H1 (cell line): ENCODE measurements at regions of chr14 and their contacts with region 1.

Region 1: GRCh38 chr14:69611201-69612011 is at the start of gene SUSD6:
- DNase-seq: peak; percentile 29 to 77
- H3K4me3 ChIP-seq: peak within 1 kb of the TSS; percentile 59 to 80 (median 62)
- H3K27ac ChIP-seq: no peak within 1 kb of the TSS
- H3K4me1 ChIP-seq: peaks cover 2 to 15% (median 5%) of the 10 kb centered on the region in 4 experiments; a peak in 5 of 7 replicates
- H3K27me3 ChIP-seq: peaks cover 0 to 3% (median 0%) of the 10 kb centered on the region in 4 experiments; a peak in 1 of 7 replicates
- CTCF ChIP-seq: no peak; a peak in 1 of 4 replicates
- EP300 ChIP-seq: no peak
- POLR2A ChIP-seq: no peak
- RAD21 ChIP-seq: no peak; a peak in 1 of 4 replicates
- total RNA-seq, gene SUSD6: 3.8 and 5.1 TPM in 2 replicates

Region 2: DNA sequence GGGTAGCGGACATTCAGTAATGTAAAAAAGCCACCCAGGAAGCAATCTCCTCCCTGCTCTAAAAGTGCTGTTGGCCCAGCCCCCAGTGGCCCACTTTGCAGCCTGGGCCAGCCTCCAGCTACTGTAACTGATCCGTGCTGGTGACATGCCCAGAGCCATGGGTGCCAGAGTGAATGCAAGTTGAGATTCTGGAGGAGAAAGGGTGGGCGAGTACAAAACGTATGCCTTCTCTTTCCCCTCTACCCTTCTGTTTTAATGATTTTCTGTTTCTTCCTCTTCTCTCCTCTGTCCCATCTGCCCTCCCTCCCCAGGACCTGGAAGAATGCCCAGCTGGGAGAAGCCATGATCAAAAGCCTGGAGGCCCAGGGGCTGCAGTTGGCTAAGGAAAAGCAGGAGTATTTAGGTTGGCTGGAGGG is 110.0 kb before region 1 on chr14:
- CTCF ChIA-PET with region 1: no interaction called
- POLR2A ChIA-PET with region 1: no interaction called
- DNase-seq: no peak
- H3K4me3 ChIP-seq: no peak overlapping the region
- H3K27ac ChIP-seq: no peak overlapping the region
- H3K4me1 ChIP-seq: peaks cover 0 to 5% (median 1%) of the 10 kb centered on the region in 4 experiments; a peak in 2 of 7 replicates
- H3K27me3 ChIP-seq: no peaks in the 10 kb centered on the region; a peak in 1 of 7 replicates
- CTCF ChIP-seq: no peak
- EP300 ChIP-seq: no peak
- POLR2A ChIP-seq: no peak
- RAD21 ChIP-seq: no peak

Region 3: GRCh38 chr14:69586404-69586803 is 25.0 kb before region 1 on chr14:
- CTCF ChIA-PET with region 1: interaction called, 20 read pairs
- POLR2A ChIA-PET with region 1: no interaction called
- DNase-seq: no peak
- H3K4me3 ChIP-seq: no peak overlapping the region
- H3K27ac ChIP-seq: no peak overlapping the region
- H3K4me1 ChIP-seq: no peaks in the 10 kb centered on the region; a peak in 1 of 7 replicates
- H3K27me3 ChIP-seq: no peaks in the 10 kb centered on the region
- CTCF ChIP-seq: no peak
- EP300 ChIP-seq: no peak
- POLR2A ChIP-seq: no peak
- RAD21 ChIP-seq: no peak

Region 4: GRCh38 chr14:69593018-69593677 is 18.3 kb before region 1 on chr14:
- CTCF ChIA-PET with region 1: interaction called, 29 read pairs
- POLR2A ChIA-PET with region 1: interaction called, 4 read pairs
- DNase-seq: no peak
- H3K4me3 ChIP-seq: no peak overlapping the region
- H3K27ac ChIP-seq: no peak overlapping the region
- H3K4me1 ChIP-seq: no peaks in the 10 kb centered on the region
- H3K27me3 ChIP-seq: no peaks in the 10 kb centered on the region
- CTCF ChIP-seq: no peak
- EP300 ChIP-seq: no peak
- POLR2A ChIP-seq: no peak
- RAD21 ChIP-seq: no peak

Region 5: DNA sequence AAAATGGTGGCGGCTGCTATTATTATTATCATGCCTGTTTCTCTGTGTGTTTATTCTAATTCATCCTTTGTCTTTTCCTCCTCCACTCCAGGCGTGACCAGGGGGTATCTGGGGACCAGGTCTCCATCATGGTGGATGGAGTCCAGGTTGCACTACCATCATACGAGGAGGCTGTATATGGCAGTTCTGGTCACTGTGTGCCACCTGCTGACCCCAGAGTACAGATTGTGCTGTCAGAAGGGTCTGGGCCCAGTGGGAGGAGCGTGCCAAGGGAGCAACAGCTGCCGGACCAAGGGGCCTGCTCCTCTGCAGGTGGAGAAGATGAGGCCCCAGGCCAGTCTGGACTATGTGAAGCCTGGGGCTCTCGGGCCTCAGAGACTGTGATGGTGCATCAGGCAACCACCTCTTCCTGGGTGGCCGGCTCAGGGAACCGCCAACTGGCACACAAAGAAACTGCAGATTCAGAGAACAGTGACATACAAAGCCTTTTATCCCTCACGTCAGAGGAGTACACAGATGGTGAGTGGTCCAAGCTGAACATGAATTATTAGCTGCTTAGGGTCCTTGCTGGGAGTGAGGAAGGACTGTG is 97.3 kb after region 1 on chr14:
- CTCF ChIA-PET with region 1: interaction called, 39 read pairs
- POLR2A ChIA-PET with region 1: interaction called, 3 read pairs
- DNase-seq: no peak
- H3K4me3 ChIP-seq: no peak overlapping the region
- H3K27ac ChIP-seq: no peak overlapping the region
- H3K4me1 ChIP-seq: peaks cover 6 to 26% (median 18%) of the 10 kb centered on the region in 4 experiments
- H3K27me3 ChIP-seq: no peaks in the 10 kb centered on the region
- CTCF ChIP-seq: peak; percentile 44 to 66 (median 60)
- EP300 ChIP-seq: no peak
- POLR2A ChIP-seq: no peak
- RAD21 ChIP-seq: peak; percentile 47 to 68

Region 6: GRCh38 chr14:69715725-69716477 is 104.5 kb after region 1 on chr14:
- CTCF ChIA-PET with region 1: interaction called, 45 read pairs
- POLR2A ChIA-PET with region 1: interaction called, 3 read pairs
- DNase-seq: no peak
- H3K4me3 ChIP-seq: no peak overlapping the region
- H3K27ac ChIP-seq: no peak overlapping the region
- H3K4me1 ChIP-seq: peaks cover 16 to 39% (median 31%) of the 10 kb centered on the region in 4 experiments
- H3K27me3 ChIP-seq: no peaks in the 10 kb centered on the region
- CTCF ChIP-seq: no peak
- EP300 ChIP-seq: no peak
- POLR2A ChIP-seq: no peak
- RAD21 ChIP-seq: no peak

Region 7: GRCh38 chr14:69766984-69767368 is 155.6 kb after region 1 on chr14 and contains the start of gene SRSF5:
- CTCF ChIA-PET with region 1: interaction called, 4 read pairs
- POLR2A ChIA-PET with region 1: interaction called, 18 read pairs
- DNase-seq: peak; percentile 88 to 95
- H3K4me3 ChIP-seq: peak within 1 kb of the TSS; percentile 95 to 100 (median 98)
- H3K27ac ChIP-seq: peak within 1 kb of the TSS; percentile 99
- H3K4me1 ChIP-seq: peaks cover 0 to 5% (median 3%) of the 10 kb centered on the region in 4 experiments; a peak in 5 of 7 replicates
- H3K27me3 ChIP-seq: no peaks in the 10 kb centered on the region
- CTCF ChIP-seq: no peak
- EP300 ChIP-seq: no peak
- POLR2A ChIP-seq: peak; percentile 99
- RAD21 ChIP-seq: no peak
- total RNA-seq, gene SRSF5: 226 and 238 TPM in 2 replicates